BJ (cell line): ENCODE measurements at regions of chr11 and their contacts with region 1.

Region 1: GRCh38 chr11:16785520-16786128 is 47.2 kb downstream of the C11orf58 start:
- DNase-seq: no peak
- H3K4me3 ChIP-seq: no peak overlapping the region
- H3K27me3 ChIP-seq: no peaks in the 10 kb centered on the region
- CTCF ChIP-seq: peak; percentile 91

Region 2: GRCh38 chr11:15761235-15761634 is 1024.4 kb before region 1 on chr11:
- CTCF ChIA-PET with region 1: no interaction called
- POLR2A ChIA-PET with region 1: interaction called, 17 read pairs
- DNase-seq: no peak
- H3K4me3 ChIP-seq: no peak overlapping the region
- H3K27me3 ChIP-seq: peaks cover 2% of the 10 kb centered on the region; the same call in 1 of the 2 replicates
- CTCF ChIP-seq: no peak

Region 3: GRCh38 chr11:16511116-16512114 is 274.2 kb before region 1 on chr11:
- CTCF ChIA-PET with region 1: no interaction called
- POLR2A ChIA-PET with region 1: no interaction called
- DNase-seq: peak; percentile 38
- H3K4me3 ChIP-seq: no peak overlapping the region
- H3K27me3 ChIP-seq: no peaks in the 10 kb centered on the region
- CTCF ChIP-seq: no peak

Region 4: GRCh38 chr11:16713594-16713993 is 72.0 kb before region 1 on chr11:
- CTCF ChIA-PET with region 1: no interaction called
- POLR2A ChIA-PET with region 1: no interaction called
- DNase-seq: no peak
- H3K4me3 ChIP-seq: no peak overlapping the region
- H3K27me3 ChIP-seq: no peaks in the 10 kb centered on the region
- CTCF ChIP-seq: no peak

Region 5: DNA sequence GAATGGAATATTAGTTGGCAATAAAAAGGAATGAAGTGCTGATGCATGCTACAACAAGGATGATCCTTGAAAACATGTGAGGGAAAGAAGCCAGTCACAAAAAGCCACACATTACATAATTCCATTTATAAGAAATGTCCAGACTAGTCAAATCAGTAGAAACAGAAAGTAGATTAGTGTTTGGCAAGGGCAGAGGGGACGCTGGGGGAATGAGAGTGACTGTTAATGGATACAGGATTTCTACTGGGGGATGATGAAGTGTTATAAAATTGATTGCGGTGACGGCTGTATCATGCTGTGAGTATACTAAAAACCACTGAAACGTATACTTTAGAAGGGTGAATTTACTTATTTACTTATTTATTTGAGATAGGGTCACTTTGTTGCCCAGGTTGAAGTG is 10.7 kb after region 1 on chr11:
- CTCF ChIA-PET with region 1: interaction called, 14 read pairs
- POLR2A ChIA-PET with region 1: no interaction called
- DNase-seq: no peak
- H3K4me3 ChIP-seq: no peak overlapping the region
- H3K27me3 ChIP-seq: no peaks in the 10 kb centered on the region
- CTCF ChIP-seq: no peak

Region 6: GRCh38 chr11:16801288-16801980 is 15.8 kb after region 1 on chr11:
- CTCF ChIA-PET with region 1: interaction called, 14 read pairs
- POLR2A ChIA-PET with region 1: no interaction called
- DNase-seq: no peak
- H3K4me3 ChIP-seq: no peak overlapping the region
- H3K27me3 ChIP-seq: no peaks in the 10 kb centered on the region
- CTCF ChIP-seq: no peak

Region 7: DNA sequence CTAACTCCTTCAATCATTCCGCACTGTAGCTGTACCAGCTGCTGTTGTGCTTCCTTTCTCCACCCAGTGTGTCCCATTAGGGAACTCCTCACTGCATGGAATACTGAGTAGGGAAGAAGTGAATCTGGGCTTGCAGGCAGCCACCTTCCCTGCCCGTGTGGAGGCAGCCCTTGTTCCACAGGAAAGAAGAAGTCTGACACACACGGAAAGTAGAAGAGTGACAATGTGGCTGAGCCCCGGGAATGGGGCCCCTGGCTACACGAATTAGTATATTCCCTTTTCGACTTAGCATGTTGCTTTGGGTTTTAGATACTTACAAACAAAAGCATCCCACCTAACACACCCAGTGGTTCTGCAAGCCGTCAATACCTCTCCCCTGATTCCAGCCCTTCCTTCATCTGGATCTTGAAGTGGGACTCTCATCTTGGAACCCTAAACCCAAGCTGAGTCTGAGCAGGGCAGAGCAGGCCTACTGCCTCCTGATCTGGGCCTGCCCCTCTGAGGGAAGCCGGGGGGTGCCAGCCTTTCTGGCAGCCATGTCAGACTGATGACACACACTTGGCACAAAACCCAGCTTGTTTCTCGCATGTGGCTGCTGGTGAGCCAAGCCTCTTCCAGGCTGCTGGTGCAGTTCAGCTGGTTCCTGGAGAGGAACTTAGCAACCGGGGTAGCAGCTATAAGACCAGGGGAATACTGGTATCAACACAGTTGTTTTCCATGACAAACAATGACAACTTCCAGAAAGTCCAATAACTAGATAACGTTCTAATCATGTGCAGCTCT is 24.5 kb after region 1 on chr11:
- CTCF ChIA-PET with region 1: interaction called, 11 read pairs
- POLR2A ChIA-PET with region 1: no interaction called
- DNase-seq: no peak
- H3K4me3 ChIP-seq: no peak overlapping the region
- H3K27me3 ChIP-seq: peaks cover 10% of the 10 kb centered on the region
- CTCF ChIP-seq: no peak

Region 8: DNA sequence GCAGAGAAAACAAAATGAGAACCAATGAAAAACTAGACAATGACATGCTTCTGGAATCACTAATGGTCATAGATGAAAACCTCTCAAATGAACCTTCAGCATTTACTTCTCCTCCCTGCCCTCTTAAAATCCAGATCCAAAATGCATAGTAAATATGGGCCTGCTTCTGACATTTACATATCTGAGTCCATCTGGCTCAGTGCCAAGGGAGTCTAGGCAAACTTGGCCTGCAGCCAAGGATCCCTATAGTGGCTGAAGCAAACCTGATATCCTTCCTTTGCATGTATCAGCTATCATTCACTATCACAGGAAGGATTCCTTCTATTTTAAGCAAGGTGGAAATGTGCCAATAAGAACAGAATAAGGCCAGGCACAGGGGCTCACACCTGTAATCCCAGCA is 57.7 kb after region 1 on chr11:
- CTCF ChIA-PET with region 1: no interaction called
- POLR2A ChIA-PET with region 1: no interaction called
- DNase-seq: no peak
- H3K4me3 ChIP-seq: no peak overlapping the region
- H3K27me3 ChIP-seq: no peaks in the 10 kb centered on the region
- CTCF ChIP-seq: no peak

Region 9: GRCh38 chr11:16881074-16881709 is 95.6 kb after region 1 on chr11:
- CTCF ChIA-PET with region 1: interaction called, 10 read pairs
- POLR2A ChIA-PET with region 1: no interaction called
- DNase-seq: no peak
- H3K4me3 ChIP-seq: no peak overlapping the region
- H3K27me3 ChIP-seq: no peaks in the 10 kb centered on the region; the same call in 1 of the 2 replicates
- CTCF ChIP-seq: peak; percentile 30

Region 10: GRCh38 chr11:17063171-17064002 is 277.8 kb after region 1 on chr11:
- CTCF ChIA-PET with region 1: interaction called, 73 read pairs
- POLR2A ChIA-PET with region 1: no interaction called
- DNase-seq: no peak
- H3K4me3 ChIP-seq: no peak overlapping the region
- H3K27me3 ChIP-seq: no peaks in the 10 kb centered on the region
- CTCF ChIP-seq: peak; percentile 87